Right ventricle myocardium inferior (tissue), 1 donor: ENCODE measurements at regions of chr5 and their contacts with region 1.

Region 1: GRCh38 chr5:154610321-154611154 is 132.5 kb upstream of the HAND1 start:
- DNase-seq: peak; percentile 75
- ATAC-seq: peak; percentile 93

Region 2: GRCh38 chr5:154467655-154468354 is 142.7 kb before region 1 on chr5:
- intact Hi-C with region 1: loop called (anchors 1 kb)
- DNase-seq: peak; percentile 90
- ATAC-seq: peak; percentile 85

Region 3: DNA sequence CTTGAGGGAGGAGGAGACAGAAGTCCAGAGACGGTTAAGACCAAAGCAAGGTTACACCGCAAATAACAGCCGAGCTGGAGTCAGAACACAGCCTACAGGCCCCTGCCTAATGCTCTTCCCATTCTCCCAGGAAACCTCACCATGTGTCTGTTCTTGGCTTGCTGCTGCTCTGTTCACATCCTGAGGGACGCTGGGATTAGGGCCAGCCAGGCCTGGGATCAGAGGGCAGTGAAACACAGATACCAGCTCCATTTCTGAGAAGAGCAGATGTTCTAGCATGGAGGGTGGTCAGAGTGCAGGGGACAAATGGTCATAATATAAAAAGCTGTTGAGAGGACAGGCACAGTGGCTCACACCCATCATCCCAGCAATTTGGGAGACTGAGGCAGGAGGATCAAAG is 19.9 kb after region 1 on chr5:
- intact Hi-C with region 1: no loop called
- DNase-seq: no peak
- ATAC-seq: peak; percentile 27

Region 4: DNA sequence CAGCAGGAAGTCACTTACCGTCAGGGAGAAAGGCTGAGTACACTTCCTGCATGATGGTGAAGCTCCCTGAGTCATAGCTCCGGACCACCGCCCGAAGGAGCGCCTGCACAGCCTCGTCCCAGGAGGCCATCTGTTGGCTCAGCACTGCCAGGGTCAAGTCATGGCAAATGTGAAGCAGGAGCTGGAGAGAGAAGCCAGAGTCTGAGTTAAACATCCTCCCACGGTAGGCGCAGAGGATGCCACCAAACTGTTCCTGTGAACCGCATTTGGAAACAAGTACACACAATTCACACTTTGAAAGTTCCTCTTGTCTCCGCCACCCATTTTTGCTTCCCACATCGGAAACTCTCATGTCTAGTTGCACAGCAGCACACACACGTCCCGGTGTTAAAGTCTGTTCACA is 281.8 kb after region 1 on chr5:
- intact Hi-C with region 1: no loop called
- DNase-seq: no peak
- ATAC-seq: no peak